Mammary epithelial cell (primary cell): ENCODE measurements at regions of chr19 and their contacts with region 1.

Region 1: GRCh38 chr19:7004313-7004931 is 16.8 kb downstream of the MBD3L2B start:
- DNase-seq: no peak
- H3K4me3 ChIP-seq: no peak overlapping the region
- H3K27ac ChIP-seq: no peak overlapping the region
- H3K4me1 ChIP-seq: no peaks in the 10 kb centered on the region
- H3K27me3 ChIP-seq: no peaks in the 10 kb centered on the region
- CTCF ChIP-seq: peak; percentile 83

Region 2: GRCh38 chr19:6952956-6953355 is 51.5 kb before region 1 on chr19:
- CTCF ChIA-PET with region 1: interaction called, 21 read pairs
- dilution Hi-C with region 1: no loop called
- in situ Hi-C with region 1: no loop called
- intact Hi-C with region 1: no loop called
- DNase-seq: no peak
- H3K4me3 ChIP-seq: no peak overlapping the region
- H3K27ac ChIP-seq: no peak overlapping the region
- H3K4me1 ChIP-seq: no peaks in the 10 kb centered on the region
- H3K27me3 ChIP-seq: no peaks in the 10 kb centered on the region
- CTCF ChIP-seq: no peak